PC-9 (cell line): ENCODE measurements at regions of chr1 and their contacts with region 1.

Region 1: GRCh38 chr1:168110896-168111545 is 25.7 kb downstream of the GPR161 start:
- DNase-seq: no peak
- H3K4me3 ChIP-seq: no peak overlapping the region
- H3K27ac ChIP-seq: no peak overlapping the region
- H3K4me1 ChIP-seq: 0 out of 2 replicates have a peak, but pooled peaks cover 1% of the 10 kb centered on the region
- H3K27me3 ChIP-seq: no peaks in the 10 kb centered on the region
- CTCF ChIP-seq: no peak

Region 2: DNA sequence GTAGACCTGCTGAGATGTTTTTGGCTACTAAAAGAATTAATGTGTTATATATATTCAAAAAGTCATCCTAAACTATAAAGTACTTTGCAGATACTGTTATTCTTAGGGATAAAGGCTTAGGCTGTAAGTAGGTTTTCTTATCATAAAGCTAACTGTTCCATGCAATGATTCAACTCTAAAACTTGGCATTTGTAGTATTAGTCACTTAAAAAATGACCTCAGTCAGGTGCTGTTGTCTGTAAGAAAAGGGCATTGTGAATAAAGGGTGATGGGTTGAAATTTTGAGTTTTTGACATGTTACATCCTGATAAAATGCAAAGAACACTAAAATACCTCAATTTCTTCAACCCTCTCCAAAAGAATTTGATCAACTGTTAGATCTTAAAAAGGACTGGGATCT is 230.0 kb before region 1 on chr1:
- CTCF ChIA-PET with region 1: no interaction called
- POLR2A ChIA-PET with region 1: no interaction called
- intact Hi-C with region 1: no loop called
- DNase-seq: no peak
- H3K4me3 ChIP-seq: no peak overlapping the region
- H3K27ac ChIP-seq: no peak overlapping the region
- H3K4me1 ChIP-seq: no peaks in the 10 kb centered on the region
- H3K27me3 ChIP-seq: no peaks in the 10 kb centered on the region
- CTCF ChIP-seq: no peak

Region 3: GRCh38 chr1:168057921-168058320 is 53.1 kb before region 1 on chr1:
- CTCF ChIA-PET with region 1: no interaction called
- POLR2A ChIA-PET with region 1: interaction called, 21 read pairs
- intact Hi-C with region 1: no loop called
- DNase-seq: no peak
- H3K4me3 ChIP-seq: no peak overlapping the region
- H3K27ac ChIP-seq: no peak overlapping the region
- H3K4me1 ChIP-seq: no peaks in the 10 kb centered on the region
- H3K27me3 ChIP-seq: no peaks in the 10 kb centered on the region
- CTCF ChIP-seq: no peak

Region 4: GRCh38 chr1:168089326-168089978 is 21.6 kb before region 1 on chr1:
- CTCF ChIA-PET with region 1: no interaction called
- POLR2A ChIA-PET with region 1: no interaction called
- intact Hi-C with region 1: no loop called
- DNase-seq: no peak
- H3K4me3 ChIP-seq: no peak overlapping the region
- H3K27ac ChIP-seq: no peak overlapping the region
- H3K4me1 ChIP-seq: no peaks in the 10 kb centered on the region
- H3K27me3 ChIP-seq: no peaks in the 10 kb centered on the region
- CTCF ChIP-seq: no peak

Region 5: GRCh38 chr1:168148916-168149315 is 37.9 kb after region 1 on chr1:
- CTCF ChIA-PET with region 1: no interaction called
- POLR2A ChIA-PET with region 1: no interaction called
- intact Hi-C with region 1: no loop called
- DNase-seq: no peak
- H3K4me3 ChIP-seq: no peak overlapping the region
- H3K27ac ChIP-seq: no peak overlapping the region
- H3K4me1 ChIP-seq: no peaks in the 10 kb centered on the region
- H3K27me3 ChIP-seq: no peaks in the 10 kb centered on the region
- CTCF ChIP-seq: no peak